Upper lobe of right lung (tissue), 1 donor: ENCODE measurements at regions of chr10 and their contacts with region 1.

Region 1: DNA sequence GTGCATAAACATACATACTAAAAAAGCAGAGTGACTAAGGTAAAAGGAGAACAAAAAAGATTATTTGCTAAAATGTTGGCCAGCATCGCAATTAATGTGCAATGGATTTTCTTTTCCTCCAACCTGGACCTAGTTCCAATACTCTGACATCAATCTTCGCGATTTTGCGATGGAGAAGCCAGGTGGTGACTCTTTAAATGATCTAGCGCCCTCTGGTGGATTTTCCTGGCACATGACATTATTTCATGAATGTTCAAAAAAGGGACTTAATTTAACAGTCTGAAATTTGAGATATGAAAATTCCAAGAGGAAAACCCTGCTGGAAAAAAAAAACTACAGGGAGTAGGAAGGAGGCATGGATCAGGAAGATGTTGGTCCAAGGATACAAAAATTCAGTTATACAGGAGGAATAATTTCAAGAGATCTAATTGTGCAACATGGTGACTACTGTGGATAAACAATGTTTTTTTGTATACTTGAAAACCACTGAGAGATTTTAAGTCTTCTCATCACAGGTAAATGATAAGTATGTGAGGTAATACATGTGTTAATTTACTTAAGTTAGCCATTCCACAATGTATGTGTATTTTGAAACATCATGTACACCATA is 4.3 kb upstream of the KCNMA1 start:
- DNase-seq: no peak
- ATAC-seq: peak; percentile 53
- H3K4me3 ChIP-seq: no peak overlapping the region
- H3K27ac ChIP-seq: no peak overlapping the region
- H3K4me1 ChIP-seq: no peaks in the 10 kb centered on the region
- H3K27me3 ChIP-seq: peaks cover 29% of the 10 kb centered on the region
- CTCF ChIP-seq: peak; percentile 86

Region 2: GRCh38 chr10:77391605-77392235 is 250.2 kb before region 1 on chr10:
- intact Hi-C with region 1: loop called (anchors 10 kb)
- DNase-seq: peak; percentile 73
- ATAC-seq: peak; percentile 84
- H3K4me3 ChIP-seq: no peak overlapping the region
- H3K27ac ChIP-seq: no peak overlapping the region
- H3K4me1 ChIP-seq: peaks cover 11% of the 10 kb centered on the region
- H3K27me3 ChIP-seq: no peaks in the 10 kb centered on the region
- CTCF ChIP-seq: peak; percentile 47

Region 3: DNA sequence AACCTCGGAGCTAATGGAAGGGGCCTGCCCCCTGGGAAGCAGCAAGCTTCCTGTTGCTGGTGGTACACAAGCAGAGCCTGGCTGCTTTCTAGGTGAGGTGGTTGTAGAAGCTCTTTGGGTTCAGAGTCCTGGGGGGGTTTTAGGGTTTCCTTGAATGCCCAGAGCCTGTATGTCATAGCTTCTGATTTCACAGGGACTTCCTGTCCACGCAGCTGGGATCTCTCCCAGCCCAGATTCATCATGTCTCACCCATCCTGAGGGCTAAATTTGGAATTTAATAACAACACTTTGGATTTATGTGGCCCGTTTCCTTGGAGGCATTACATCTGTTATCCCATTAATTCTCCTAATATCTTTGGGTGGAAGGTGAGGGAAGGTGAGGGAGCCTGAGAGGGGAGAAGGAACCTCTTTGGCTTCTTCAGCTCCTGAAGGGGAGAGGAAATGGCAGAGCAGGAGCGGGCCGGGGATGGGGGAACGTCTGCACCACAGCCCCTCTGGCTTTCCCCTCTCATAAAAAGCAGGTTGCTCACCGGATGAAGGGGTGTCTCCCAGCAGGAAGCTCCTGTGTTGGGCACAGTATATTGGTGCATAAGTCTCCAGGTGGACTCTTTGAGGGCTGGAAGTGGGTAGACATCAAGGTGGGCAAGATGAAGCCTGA is 411.4 kb after region 1 on chr10:
- intact Hi-C with region 1: no loop called
- DNase-seq: no peak
- ATAC-seq: no peak
- H3K4me3 ChIP-seq: no peak overlapping the region
- H3K27ac ChIP-seq: no peak overlapping the region
- H3K4me1 ChIP-seq: peaks cover 7% of the 10 kb centered on the region
- H3K27me3 ChIP-seq: no peaks in the 10 kb centered on the region
- CTCF ChIP-seq: no peak